Activated B cell treated with CpG ODN at 0.5 μM for 24 hours (primary cell): ENCODE measurements at regions of chr1 and their contacts with region 1.

Region 1: GRCh38 chr1:181062836-181063428 is 25.6 kb upstream of the IER5 start:
- DNase-seq: no peak
- ATAC-seq: peak; percentile 69
- H3K4me3 Mint-ChIP-seq: peak overlapping the region; percentile 79
- H3K27ac Mint-ChIP-seq: peak overlapping the region; percentile 92
- H3K4me1 Mint-ChIP-seq: peaks cover 34% of the 10 kb centered on the region
- H3K27me3 Mint-ChIP-seq: no peaks in the 10 kb centered on the region
- CTCF ChIP-seq: no peak

Region 2: DNA sequence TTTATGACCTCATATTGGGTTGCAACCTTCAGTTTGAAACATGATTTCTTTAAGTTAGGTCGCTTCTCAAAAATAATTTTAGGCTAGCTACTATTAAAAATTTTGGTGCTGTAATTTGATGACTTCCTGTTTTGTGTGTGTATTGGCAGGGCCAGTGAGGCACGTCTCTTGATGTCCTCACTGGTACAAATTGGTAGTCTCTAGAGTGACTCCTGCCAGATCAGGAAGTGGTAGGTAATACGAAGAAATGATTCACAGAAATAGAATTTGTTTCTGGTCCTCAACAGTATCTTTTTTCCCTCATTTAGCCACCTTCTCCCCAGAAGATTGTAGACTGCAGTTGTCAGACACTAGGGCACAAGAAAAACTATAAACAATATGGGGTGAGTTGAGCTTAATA is 271.1 kb before region 1 on chr1:
- CTCF ChIA-PET with region 1: no interaction called
- POLR2A ChIA-PET with region 1: no interaction called
- intact Hi-C with region 1: no loop called
- DNase-seq: no peak
- ATAC-seq: peak; percentile 34
- H3K4me3 Mint-ChIP-seq: no peak overlapping the region
- H3K27ac Mint-ChIP-seq: no peak overlapping the region
- H3K4me1 Mint-ChIP-seq: peaks cover 11% of the 10 kb centered on the region
- H3K27me3 Mint-ChIP-seq: no peaks in the 10 kb centered on the region
- CTCF ChIP-seq: no peak

Region 3: GRCh38 chr1:180954005-180954800 is 108.7 kb before region 1 on chr1:
- CTCF ChIA-PET with region 1: no interaction called
- POLR2A ChIA-PET with region 1: no interaction called
- intact Hi-C with region 1: no loop called
- DNase-seq: peak; percentile 46
- ATAC-seq: peak; percentile 89
- H3K4me3 Mint-ChIP-seq: peak overlapping the region; percentile 68
- H3K27ac Mint-ChIP-seq: no peak overlapping the region
- H3K4me1 Mint-ChIP-seq: peaks cover 3% of the 10 kb centered on the region
- H3K27me3 Mint-ChIP-seq: no peaks in the 10 kb centered on the region
- CTCF ChIP-seq: no peak

Region 4: GRCh38 chr1:181033799-181034451 is 29.0 kb before region 1 on chr1 and contains the start of gene MR1:
- CTCF ChIA-PET with region 1: interaction called, 9 read pairs
- POLR2A ChIA-PET with region 1: interaction called, 20 read pairs
- intact Hi-C with region 1: loop called (anchors 1 kb)
- DNase-seq: no peak
- ATAC-seq: peak; percentile 96
- H3K4me3 Mint-ChIP-seq: peak within 1 kb of the TSS; percentile 98
- H3K27ac Mint-ChIP-seq: peak within 1 kb of the TSS; percentile 99
- H3K4me1 Mint-ChIP-seq: peaks cover 60% of the 10 kb centered on the region
- H3K27me3 Mint-ChIP-seq: no peaks in the 10 kb centered on the region
- CTCF ChIP-seq: no peak
- total RNA-seq, gene MR1: 24.3 and 24.8 TPM in 2 replicates

Region 5: DNA sequence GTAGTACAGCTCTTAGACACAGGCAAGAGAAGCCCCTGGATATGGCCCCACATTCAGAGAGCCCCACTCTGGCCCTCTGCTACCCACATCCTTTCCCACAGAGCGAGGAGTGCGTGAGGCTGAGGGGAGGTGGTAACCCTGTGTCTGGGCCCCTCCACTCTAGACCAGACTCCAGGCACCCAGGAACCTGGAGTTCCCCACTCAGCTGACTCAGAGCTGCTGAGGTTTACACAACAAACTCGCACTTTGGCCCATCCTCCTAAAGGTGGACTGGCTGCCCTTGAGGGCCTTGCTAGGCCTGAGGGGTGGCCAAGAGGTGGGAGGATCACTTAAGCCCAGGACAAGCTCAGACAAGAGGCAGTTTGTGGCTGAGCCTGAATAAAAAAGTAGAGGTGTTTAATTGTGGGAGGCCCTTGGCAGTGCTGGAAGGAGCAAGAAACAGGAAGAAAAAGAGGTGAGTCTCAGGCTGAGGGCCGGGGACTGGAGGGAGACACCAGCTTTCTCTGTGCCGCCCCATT is 18.4 kb before region 1 on chr1:
- CTCF ChIA-PET with region 1: interaction called, 5 read pairs
- POLR2A ChIA-PET with region 1: interaction called, 13 read pairs
- intact Hi-C with region 1: no loop called
- DNase-seq: no peak
- ATAC-seq: peak; percentile 62
- H3K4me3 Mint-ChIP-seq: no peak overlapping the region
- H3K27ac Mint-ChIP-seq: peak overlapping the region; percentile 36
- H3K4me1 Mint-ChIP-seq: peaks cover 36% of the 10 kb centered on the region
- H3K27me3 Mint-ChIP-seq: no peaks in the 10 kb centered on the region
- CTCF ChIP-seq: no peak

Region 6: GRCh38 chr1:181099152-181100014 is 36.5 kb after region 1 on chr1:
- CTCF ChIA-PET with region 1: no interaction called
- POLR2A ChIA-PET with region 1: interaction called, 17 read pairs
- intact Hi-C with region 1: loop called (anchors 1 kb)
- DNase-seq: no peak
- ATAC-seq: peak; percentile 30
- H3K4me3 Mint-ChIP-seq: peak overlapping the region; percentile 47
- H3K27ac Mint-ChIP-seq: peak overlapping the region; percentile 74
- H3K4me1 Mint-ChIP-seq: peaks cover 69% of the 10 kb centered on the region
- H3K27me3 Mint-ChIP-seq: no peaks in the 10 kb centered on the region
- CTCF ChIP-seq: no peak

Region 7: GRCh38 chr1:181105134-181106021 is 42.4 kb after region 1 on chr1:
- CTCF ChIA-PET with region 1: no interaction called
- POLR2A ChIA-PET with region 1: interaction called, 17 read pairs
- intact Hi-C with region 1: loop called (anchors 1 kb)
- DNase-seq: peak; percentile 88
- ATAC-seq: peak; percentile 87
- H3K4me3 Mint-ChIP-seq: peak overlapping the region; percentile 85
- H3K27ac Mint-ChIP-seq: peak overlapping the region; percentile 89
- H3K4me1 Mint-ChIP-seq: peaks cover 40% of the 10 kb centered on the region
- H3K27me3 Mint-ChIP-seq: no peaks in the 10 kb centered on the region
- CTCF ChIP-seq: no peak

Region 8: GRCh38 chr1:181128592-181129497 is 65.9 kb after region 1 on chr1:
- CTCF ChIA-PET with region 1: no interaction called
- POLR2A ChIA-PET with region 1: interaction called, 10 read pairs
- intact Hi-C with region 1: loop called (anchors 2 kb)
- DNase-seq: peak; percentile 60
- ATAC-seq: peak; percentile 60
- H3K4me3 Mint-ChIP-seq: peak overlapping the region; percentile 90
- H3K27ac Mint-ChIP-seq: peak overlapping the region; percentile 94
- H3K4me1 Mint-ChIP-seq: peaks cover 90% of the 10 kb centered on the region
- H3K27me3 Mint-ChIP-seq: no peaks in the 10 kb centered on the region
- CTCF ChIP-seq: no peak

Region 9: GRCh38 chr1:181134543-181135362 is 71.8 kb after region 1 on chr1:
- CTCF ChIA-PET with region 1: no interaction called
- POLR2A ChIA-PET with region 1: interaction called, 14 read pairs
- intact Hi-C with region 1: loop called (anchors 2 kb)
- DNase-seq: peak; percentile 63
- ATAC-seq: peak; percentile 49
- H3K4me3 Mint-ChIP-seq: peak overlapping the region; percentile 84
- H3K27ac Mint-ChIP-seq: peak overlapping the region; percentile 99
- H3K4me1 Mint-ChIP-seq: peaks cover 94% of the 10 kb centered on the region
- H3K27me3 Mint-ChIP-seq: no peaks in the 10 kb centered on the region
- CTCF ChIP-seq: no peak